Activated naive CD4-positive, alpha-beta T cell treated with anti-CD3 and anti-CD28 coated beads for 36 hours (primary cell): ENCODE measurements at regions of chr1 and their contacts with region 1.

Region 1: GRCh38 chr1:168603501-168604110 is 27.2 kb downstream of the XCL1 start:
- DNase-seq: peak; percentile 84
- H3K4me3 Mint-ChIP-seq: no peak overlapping the region
- H3K27ac Mint-ChIP-seq: no peak overlapping the region
- H3K4me1 Mint-ChIP-seq: no peaks in the 10 kb centered on the region
- H3K27me3 Mint-ChIP-seq: peaks cover 3% of the 10 kb centered on the region

Region 2: DNA sequence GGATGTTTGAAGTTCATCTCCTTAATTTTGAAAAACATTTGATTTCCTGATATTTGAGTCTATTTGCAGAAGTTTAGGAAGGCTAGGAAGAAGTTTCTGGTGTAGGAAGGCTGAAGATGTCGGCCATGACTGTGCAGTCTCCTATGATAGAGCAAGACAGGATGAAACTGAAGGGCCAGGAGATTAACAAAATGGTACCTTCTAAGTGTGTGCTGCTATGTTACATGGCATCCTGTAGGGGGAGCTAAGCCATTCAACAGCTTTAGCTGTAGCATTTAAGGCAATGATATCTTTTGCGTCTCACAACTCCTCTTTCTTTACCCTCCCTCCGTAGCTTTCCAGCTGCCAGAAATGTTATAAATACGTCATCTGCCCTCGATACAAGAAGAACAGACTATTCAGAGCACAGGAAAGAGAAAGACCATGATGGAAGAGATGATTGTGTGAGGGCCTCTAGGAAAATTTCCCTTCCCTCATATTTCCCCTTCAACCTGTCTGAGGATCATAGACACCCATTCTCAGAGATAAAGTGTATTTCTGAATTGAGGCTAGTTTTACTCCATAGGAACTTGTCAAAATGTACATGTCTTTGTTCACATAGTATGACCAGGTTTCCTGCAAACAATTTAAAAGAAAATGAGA is 33.9 kb after region 1 on chr1:
- CTCF ChIA-PET with region 1: interaction called, 3 read pairs
- intact Hi-C with region 1: loop called (anchors 5 kb)
- DNase-seq: peak; percentile 10
- H3K4me3 Mint-ChIP-seq: no peak overlapping the region
- H3K27ac Mint-ChIP-seq: no peak overlapping the region
- H3K4me1 Mint-ChIP-seq: no peaks in the 10 kb centered on the region
- H3K27me3 Mint-ChIP-seq: peaks cover under 1% of the 10 kb centered on the region

Region 3: GRCh38 chr1:168783458-168784230 is 180.0 kb after region 1 on chr1:
- CTCF ChIA-PET with region 1: no interaction called
- intact Hi-C with region 1: no loop called
- DNase-seq: no peak
- H3K4me3 Mint-ChIP-seq: no peak overlapping the region
- H3K27ac Mint-ChIP-seq: no peak overlapping the region
- H3K4me1 Mint-ChIP-seq: no peaks in the 10 kb centered on the region
- H3K27me3 Mint-ChIP-seq: peaks cover 13% of the 10 kb centered on the region

Region 4: GRCh38 chr1:169133801-169134502 is 530.3 kb after region 1 on chr1:
- CTCF ChIA-PET with region 1: no interaction called
- intact Hi-C with region 1: loop called (anchors 1 kb)
- DNase-seq: no peak
- H3K4me3 Mint-ChIP-seq: no peak overlapping the region
- H3K27ac Mint-ChIP-seq: no peak overlapping the region
- H3K4me1 Mint-ChIP-seq: peaks cover 5% of the 10 kb centered on the region
- H3K27me3 Mint-ChIP-seq: no peaks in the 10 kb centered on the region

Region 5: GRCh38 chr1:169236143-169236542 is 632.5 kb after region 1 on chr1:
- CTCF ChIA-PET with region 1: no interaction called
- intact Hi-C with region 1: no loop called
- DNase-seq: no peak
- H3K4me3 Mint-ChIP-seq: no peak overlapping the region
- H3K27ac Mint-ChIP-seq: no peak overlapping the region
- H3K4me1 Mint-ChIP-seq: peaks cover 2% of the 10 kb centered on the region
- H3K27me3 Mint-ChIP-seq: no peaks in the 10 kb centered on the region

Region 6: DNA sequence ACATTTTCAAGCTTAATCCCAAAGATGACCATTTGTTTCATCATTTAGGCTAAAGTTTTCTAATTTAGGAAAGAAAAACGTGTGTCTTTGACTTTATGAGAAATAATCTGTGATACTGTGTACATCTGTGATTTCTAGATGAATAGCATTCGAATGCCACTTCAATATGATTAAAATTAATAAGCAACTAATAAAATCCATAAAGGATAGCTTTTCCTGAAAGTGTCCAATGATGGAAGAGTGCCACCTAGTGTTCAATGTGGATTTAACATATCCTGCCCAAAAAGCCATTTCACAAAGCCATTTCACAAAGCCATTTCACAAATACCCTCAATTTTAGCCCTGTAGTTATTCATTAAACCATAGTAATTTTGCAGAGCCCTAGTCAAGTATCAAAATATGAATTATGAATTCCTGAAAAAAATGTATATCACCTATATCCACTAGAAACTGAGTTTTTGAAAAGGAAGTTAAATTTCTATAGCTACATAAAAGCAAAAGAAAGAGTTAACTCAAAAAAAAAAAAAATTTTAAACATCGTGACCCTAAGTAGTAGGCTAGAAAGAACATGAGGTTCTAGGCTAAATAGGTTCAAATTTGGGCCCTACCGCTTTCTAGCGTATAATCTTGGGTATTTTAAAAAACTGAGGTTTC is 744.9 kb after region 1 on chr1:
- CTCF ChIA-PET with region 1: interaction called, 31 read pairs
- intact Hi-C with region 1: loop called (anchors 1 kb)
- DNase-seq: peak; percentile 31
- H3K4me3 Mint-ChIP-seq: no peak overlapping the region
- H3K27ac Mint-ChIP-seq: no peak overlapping the region
- H3K4me1 Mint-ChIP-seq: peaks cover 9% of the 10 kb centered on the region
- H3K27me3 Mint-ChIP-seq: no peaks in the 10 kb centered on the region

Region 7: DNA sequence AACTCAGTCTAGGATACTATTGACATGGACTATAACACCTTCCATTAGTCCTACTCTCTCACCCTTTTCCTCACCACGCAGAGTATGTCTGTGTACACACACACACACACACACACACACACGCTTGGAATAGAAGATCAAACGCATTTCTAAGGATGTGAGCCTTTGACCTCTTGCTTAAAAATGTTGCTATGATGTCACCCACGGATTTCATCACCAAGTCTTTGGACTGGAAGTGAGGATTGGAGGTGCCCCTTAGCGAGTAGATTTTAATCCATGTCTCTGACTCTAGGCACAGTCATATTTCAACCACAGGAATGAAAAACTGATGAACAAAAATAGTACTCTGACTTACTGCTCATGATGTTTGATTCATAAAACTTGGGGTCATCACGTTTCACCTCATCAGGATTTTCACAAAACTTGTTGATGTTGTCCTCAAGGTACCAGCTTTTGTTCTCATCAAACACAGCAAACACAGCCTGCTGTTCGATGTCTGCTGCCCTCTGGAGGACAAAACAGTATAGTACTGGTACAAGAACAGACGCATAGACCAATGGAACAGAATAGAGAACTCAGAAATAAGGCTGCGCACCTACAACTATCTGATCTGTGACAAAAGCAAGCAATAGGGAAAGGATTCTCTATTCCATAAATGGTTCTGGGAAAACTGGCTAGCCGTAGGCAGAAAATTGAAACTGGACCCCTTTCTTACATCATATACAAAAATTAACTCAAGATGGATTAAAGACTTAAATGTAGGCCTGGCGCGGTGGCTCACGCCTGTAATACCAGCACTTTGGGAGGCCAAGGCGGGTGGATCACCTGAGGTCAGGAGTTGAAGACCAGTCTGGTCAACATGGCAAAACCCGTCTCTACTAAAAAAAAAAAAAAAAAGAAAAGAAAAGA is 942.7 kb after region 1 on chr1:
- CTCF ChIA-PET with region 1: no interaction called
- intact Hi-C with region 1: loop called (anchors 1 kb)
- DNase-seq: peak; percentile 48
- H3K4me3 Mint-ChIP-seq: no peak overlapping the region
- H3K27ac Mint-ChIP-seq: no peak overlapping the region
- H3K4me1 Mint-ChIP-seq: no peaks in the 10 kb centered on the region
- H3K27me3 Mint-ChIP-seq: no peaks in the 10 kb centered on the region